Thyroid gland (tissue), 4 donors: ENCODE measurements at regions of chr9 and their contacts with region 1.

Region 1: DNA sequence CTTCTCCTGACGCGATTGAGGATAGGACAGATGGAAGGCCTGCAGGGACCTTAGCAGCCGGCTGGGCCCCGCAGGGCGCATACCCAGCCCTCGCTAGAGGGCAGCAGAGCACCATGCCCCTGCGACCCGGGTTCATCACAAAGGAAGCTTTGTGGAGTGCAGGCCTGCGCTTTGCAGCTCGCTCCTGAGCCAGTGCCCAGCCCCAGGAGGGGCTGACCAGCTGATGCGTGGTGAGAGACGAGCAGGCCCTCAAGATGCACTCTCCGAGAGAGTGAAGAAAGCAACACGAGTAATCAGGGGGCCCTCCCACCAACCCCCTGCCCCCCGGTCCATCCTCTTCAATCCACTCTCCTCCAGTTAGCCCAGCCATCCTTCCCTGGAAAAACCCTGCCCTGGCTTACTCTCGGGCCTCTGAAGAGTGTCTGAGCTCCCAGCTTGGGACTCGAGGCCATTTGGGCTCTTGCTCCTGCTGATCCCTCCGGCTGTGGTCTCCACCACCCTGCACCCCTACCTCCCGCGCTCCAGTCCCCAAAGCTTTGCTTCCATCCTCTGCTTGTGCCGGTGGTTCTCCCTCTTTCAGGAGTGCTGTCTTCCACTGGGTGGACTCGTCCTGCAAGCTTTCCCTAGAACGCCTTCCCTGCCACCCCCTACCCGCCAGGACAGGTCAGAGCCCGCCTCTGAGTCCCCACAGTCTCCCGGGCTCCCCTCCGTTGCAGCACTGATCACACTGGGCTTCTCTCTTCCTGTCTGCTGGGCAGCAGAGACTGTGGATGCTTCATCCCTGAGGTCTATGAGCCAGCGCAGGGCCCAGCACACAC is 9.1 kb upstream of the KIF12 start:
- DNase-seq: peak; percentile 83 to 87
- H3K4me3 ChIP-seq: no peak overlapping the region
- H3K27ac ChIP-seq: no peak overlapping the region
- H3K4me1 ChIP-seq: peaks cover 8 to 15% of the 10 kb centered on the region in 2 donors
- H3K27me3 ChIP-seq: no peaks in the 10 kb centered on the region
- CTCF ChIP-seq: peak; percentile 88 to 98 (median 96)
- POLR2A ChIP-seq: no peak

Region 2: GRCh38 chr9:114153761-114154599 is 45.8 kb after region 1 on chr9:
- intact Hi-C with region 1: loop called (anchors 5 kb)
- DNase-seq: peak; percentile 47 to 50
- H3K4me3 ChIP-seq: peak overlapping the region in 1 of 3 donors; percentile 26
- H3K27ac ChIP-seq: no peak overlapping the region
- H3K4me1 ChIP-seq: peaks cover 0 to 28% of the 10 kb centered on the region in 2 donors
- H3K27me3 ChIP-seq: no peaks in the 10 kb centered on the region
- CTCF ChIP-seq: peak in 4 of 6 experiments; percentile 12 to 37 (median 26)
- POLR2A ChIP-seq: no peak

Region 3: GRCh38 chr9:114291064-114291474 is 182.8 kb after region 1 on chr9:
- intact Hi-C with region 1: loop called (anchors 2 kb)
- DNase-seq: peak; percentile 63 to 69
- H3K4me3 ChIP-seq: no peak overlapping the region
- H3K27ac ChIP-seq: no peak overlapping the region
- H3K4me1 ChIP-seq: no peaks in the 10 kb centered on the region
- H3K27me3 ChIP-seq: no peaks in the 10 kb centered on the region
- CTCF ChIP-seq: peak; percentile 84 to 90 (median 87)
- POLR2A ChIP-seq: no peak